Activated B cell treated with CpG ODN at 0.5 μM for 24 hours (primary cell): ENCODE measurements at regions of chr10 and their contacts with region 1.

Region 1: GRCh38 chr10:6678211-6678803 is 98.2 kb upstream of the PRKCQ start:
- DNase-seq: no peak
- ATAC-seq: peak; percentile 28
- H3K4me3 Mint-ChIP-seq: no peak overlapping the region
- H3K27ac Mint-ChIP-seq: no peak overlapping the region
- H3K4me1 Mint-ChIP-seq: peaks cover 3% of the 10 kb centered on the region
- H3K27me3 Mint-ChIP-seq: peaks cover 19% of the 10 kb centered on the region
- CTCF ChIP-seq: no peak

Region 2: DNA sequence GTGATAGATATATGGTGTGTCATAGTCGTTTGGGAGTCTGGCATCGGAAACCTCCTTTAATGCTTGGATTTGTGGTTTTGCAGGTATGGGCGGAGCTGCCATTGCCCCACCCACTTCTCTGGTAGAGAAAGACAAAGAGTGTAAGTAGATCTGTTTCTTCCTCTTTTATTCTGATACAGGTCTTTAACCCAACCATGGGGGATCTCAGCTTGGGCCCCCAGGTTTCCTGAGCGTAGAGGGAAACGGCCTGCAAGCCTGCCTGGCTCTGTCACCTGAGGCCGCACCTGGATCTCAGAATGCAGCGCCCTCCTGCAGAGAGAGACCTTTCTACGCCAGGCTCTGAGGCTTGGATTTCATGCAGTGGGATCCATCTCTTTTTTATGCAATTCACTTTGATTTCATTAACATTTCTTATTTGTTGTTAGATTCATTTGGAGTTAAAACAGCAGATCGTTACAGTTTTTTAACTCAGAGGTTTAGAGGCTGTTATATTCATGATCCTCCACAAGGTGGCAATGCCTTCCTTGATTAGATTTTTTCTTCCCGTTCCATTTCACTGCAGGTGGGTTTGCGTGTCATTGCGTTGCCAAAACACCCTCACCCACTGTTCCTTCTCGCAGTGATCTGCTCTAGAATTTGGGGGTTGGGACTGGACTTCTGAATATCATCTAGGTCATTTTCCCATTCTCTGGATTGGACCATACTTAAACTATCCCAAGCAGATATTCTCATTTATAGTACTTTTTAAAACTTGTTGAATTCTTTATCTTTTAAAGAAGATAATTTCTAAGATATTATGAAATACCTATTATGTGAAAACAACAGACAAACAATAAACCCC is 569.5 kb before region 1 on chr10:
- CTCF ChIA-PET with region 1: no interaction called
- POLR2A ChIA-PET with region 1: no interaction called
- intact Hi-C with region 1: loop called (anchors 1 kb)
- DNase-seq: no peak
- ATAC-seq: peak; percentile 84
- H3K4me3 Mint-ChIP-seq: no peak overlapping the region
- H3K27ac Mint-ChIP-seq: peak overlapping the region; percentile 65
- H3K4me1 Mint-ChIP-seq: peaks cover 12% of the 10 kb centered on the region
- H3K27me3 Mint-ChIP-seq: no peaks in the 10 kb centered on the region
- CTCF ChIP-seq: peak; percentile 88

Region 3: GRCh38 chr10:6416892-6417512 is 261.3 kb before region 1 on chr10:
- CTCF ChIA-PET with region 1: interaction called, 20 read pairs
- POLR2A ChIA-PET with region 1: no interaction called
- intact Hi-C with region 1: loop called (anchors 1 kb)
- DNase-seq: no peak
- ATAC-seq: peak; percentile 58
- H3K4me3 Mint-ChIP-seq: no peak overlapping the region
- H3K27ac Mint-ChIP-seq: no peak overlapping the region
- H3K4me1 Mint-ChIP-seq: no peaks in the 10 kb centered on the region
- H3K27me3 Mint-ChIP-seq: peaks cover 4% of the 10 kb centered on the region
- CTCF ChIP-seq: peak; percentile 25

Region 4: GRCh38 chr10:6445501-6446316 is 232.6 kb before region 1 on chr10:
- CTCF ChIA-PET with region 1: interaction called, 3 read pairs
- POLR2A ChIA-PET with region 1: no interaction called
- intact Hi-C with region 1: loop called (anchors 1 kb)
- DNase-seq: no peak
- ATAC-seq: no peak
- H3K4me3 Mint-ChIP-seq: no peak overlapping the region
- H3K27ac Mint-ChIP-seq: no peak overlapping the region
- H3K4me1 Mint-ChIP-seq: peaks cover 2% of the 10 kb centered on the region
- H3K27me3 Mint-ChIP-seq: peaks cover 12% of the 10 kb centered on the region
- CTCF ChIP-seq: no peak

Region 5: DNA sequence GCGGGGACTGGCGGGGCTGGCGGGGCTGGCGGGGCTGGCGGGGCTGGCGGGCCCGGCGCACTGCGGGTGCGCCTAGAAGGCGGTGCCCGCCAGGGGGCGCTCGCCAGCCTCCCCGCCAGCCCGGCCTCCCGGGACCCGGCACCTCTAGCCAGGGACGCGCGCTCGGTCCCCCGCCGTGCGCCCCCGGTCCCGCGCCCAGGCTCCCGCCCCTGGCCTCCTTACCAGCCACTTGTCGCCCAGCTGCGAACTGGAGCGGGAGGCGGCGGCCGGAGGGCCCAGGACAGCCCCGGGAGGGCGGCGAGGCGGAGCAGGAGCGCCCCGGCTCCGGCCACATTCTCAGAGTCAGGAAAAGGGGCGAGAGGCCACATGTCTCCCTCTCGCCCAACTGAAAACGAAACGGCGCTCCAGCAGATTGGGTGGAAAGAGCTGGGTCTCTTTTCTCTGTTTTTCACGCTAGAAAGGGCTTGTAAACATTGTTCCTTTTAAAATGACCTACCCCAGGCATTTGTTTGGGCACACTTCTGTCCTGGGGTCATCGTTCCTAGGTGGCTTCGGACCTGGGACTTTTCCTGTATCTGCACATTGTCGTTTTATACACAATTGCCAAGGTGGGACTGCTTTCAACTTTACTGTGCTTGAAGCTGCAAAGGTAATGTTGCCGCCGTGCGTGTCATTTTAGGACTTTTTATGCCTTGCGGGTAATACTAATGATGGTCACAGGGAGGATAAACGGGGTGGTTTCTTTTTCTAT is 97.9 kb before region 1 on chr10:
- CTCF ChIA-PET with region 1: no interaction called
- POLR2A ChIA-PET with region 1: no interaction called
- intact Hi-C with region 1: loop called (anchors 1 kb)
- DNase-seq: peak; percentile 75
- ATAC-seq: peak; percentile 93
- H3K4me3 Mint-ChIP-seq: peak overlapping the region; percentile 83
- H3K27ac Mint-ChIP-seq: no peak overlapping the region
- H3K4me1 Mint-ChIP-seq: peaks cover 5% of the 10 kb centered on the region
- H3K27me3 Mint-ChIP-seq: peaks cover 39% of the 10 kb centered on the region
- CTCF ChIP-seq: no peak

Region 6: GRCh38 chr10:6741541-6741941 is 63.2 kb after region 1 on chr10:
- CTCF ChIA-PET with region 1: no interaction called
- POLR2A ChIA-PET with region 1: no interaction called
- intact Hi-C with region 1: no loop called
- DNase-seq: no peak
- ATAC-seq: no peak
- H3K4me3 Mint-ChIP-seq: no peak overlapping the region
- H3K27ac Mint-ChIP-seq: no peak overlapping the region
- H3K4me1 Mint-ChIP-seq: no peaks in the 10 kb centered on the region
- H3K27me3 Mint-ChIP-seq: peaks cover 9% of the 10 kb centered on the region
- CTCF ChIP-seq: no peak